A549 (cell line): ENCODE measurements at regions of chr10 and their contacts with region 1.

Region 1: GRCh38 chr10:74081192-74081803 is 69.3 kb downstream of the AP3M1 start:
- DNase-seq: peak; percentile 64 to 83
- ATAC-seq: peak; percentile 76 to 81; a peak in 5 of 6 replicates
- H3K4me3 ChIP-seq: no peak overlapping the region
- H3K27ac ChIP-seq: peak overlapping the region; percentile 77 to 80
- H3K4me1 ChIP-seq: peaks cover 67% of the 10 kb centered on the region
- CTCF ChIP-seq: peak; percentile 77
- EP300 ChIP-seq: no peak
- POLR2A ChIP-seq: no peak
- RAD21 ChIP-seq: peak; percentile 79 to 84

Region 2: GRCh38 chr10:73717556-73717955 is 363.7 kb before region 1 on chr10:
- CTCF ChIA-PET with region 1: no interaction called
- POLR2A ChIA-PET with region 1: no interaction called
- DNase-seq: no peak
- ATAC-seq: no peak
- H3K4me3 ChIP-seq: no peak overlapping the region
- H3K27ac ChIP-seq: no peak overlapping the region
- H3K4me1 ChIP-seq: no peaks in the 10 kb centered on the region
- CTCF ChIP-seq: no peak
- EP300 ChIP-seq: no peak
- POLR2A ChIP-seq: no peak
- RAD21 ChIP-seq: no peak

Region 3: GRCh38 chr10:73886085-73886529 is 195.2 kb before region 1 on chr10:
- CTCF ChIA-PET with region 1: interaction called, 64 read pairs
- POLR2A ChIA-PET with region 1: interaction called, 5 read pairs
- DNase-seq: peak; percentile 84
- ATAC-seq: peak; percentile 77 to 86
- H3K4me3 ChIP-seq: no peak overlapping the region
- H3K27ac ChIP-seq: peak overlapping the region; percentile 97 to 98
- H3K4me1 ChIP-seq: peaks cover 51% of the 10 kb centered on the region
- CTCF ChIP-seq: peak; percentile 93
- EP300 ChIP-seq: no peak
- POLR2A ChIP-seq: no peak
- RAD21 ChIP-seq: peak; percentile 99

Region 4: GRCh38 chr10:73956476-73957359 is 124.6 kb before region 1 on chr10:
- CTCF ChIA-PET with region 1: interaction called, 16 read pairs
- POLR2A ChIA-PET with region 1: no interaction called
- DNase-seq: no peak
- ATAC-seq: peak; percentile 26 to 57; a peak in 3 of 6 replicates
- H3K4me3 ChIP-seq: no peak overlapping the region
- H3K27ac ChIP-seq: peak overlapping the region; percentile 29 to 30; a peak in 4 of 6 replicates
- H3K4me1 ChIP-seq: peaks cover 13% of the 10 kb centered on the region; the same call in 2 of the 3 replicates
- CTCF ChIP-seq: no peak
- EP300 ChIP-seq: no peak
- POLR2A ChIP-seq: no peak
- RAD21 ChIP-seq: no peak

Region 5: DNA sequence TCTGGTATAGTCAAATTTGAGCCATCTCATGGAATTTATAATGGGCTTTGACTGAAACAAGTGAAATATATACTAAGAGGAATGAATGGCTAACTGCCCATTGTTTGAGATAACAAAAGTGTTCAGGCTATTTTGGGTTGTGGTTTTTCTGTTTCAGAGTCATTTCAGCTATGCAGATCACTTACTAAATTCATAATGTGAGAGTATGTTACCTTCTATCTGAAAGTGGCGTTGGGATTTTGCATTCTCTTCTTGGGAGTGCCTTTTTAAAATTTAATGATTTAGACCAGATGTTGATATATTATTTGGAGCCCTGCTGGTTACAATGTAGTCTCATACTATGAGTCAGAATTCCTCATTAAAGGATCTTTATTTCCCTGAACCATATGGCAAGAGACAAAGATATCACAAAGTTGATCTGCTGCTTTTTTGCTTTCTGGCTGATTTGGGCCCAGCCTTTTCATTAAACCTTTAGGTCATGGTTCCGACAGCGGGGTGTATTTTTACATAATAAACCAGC is 73.0 kb before region 1 on chr10:
- CTCF ChIA-PET with region 1: interaction called, 32 read pairs
- POLR2A ChIA-PET with region 1: no interaction called
- DNase-seq: no peak
- ATAC-seq: peak in 1 of 2 experiments; percentile 7; a peak in 1 of 6 replicates
- H3K4me3 ChIP-seq: no peak overlapping the region
- H3K27ac ChIP-seq: peak overlapping the region in 1 of 2 experiments; percentile 69; a peak in 4 of 6 replicates
- H3K4me1 ChIP-seq: peaks cover 79% of the 10 kb centered on the region
- CTCF ChIP-seq: no peak
- EP300 ChIP-seq: no peak
- POLR2A ChIP-seq: no peak
- RAD21 ChIP-seq: no peak

Region 6: DNA sequence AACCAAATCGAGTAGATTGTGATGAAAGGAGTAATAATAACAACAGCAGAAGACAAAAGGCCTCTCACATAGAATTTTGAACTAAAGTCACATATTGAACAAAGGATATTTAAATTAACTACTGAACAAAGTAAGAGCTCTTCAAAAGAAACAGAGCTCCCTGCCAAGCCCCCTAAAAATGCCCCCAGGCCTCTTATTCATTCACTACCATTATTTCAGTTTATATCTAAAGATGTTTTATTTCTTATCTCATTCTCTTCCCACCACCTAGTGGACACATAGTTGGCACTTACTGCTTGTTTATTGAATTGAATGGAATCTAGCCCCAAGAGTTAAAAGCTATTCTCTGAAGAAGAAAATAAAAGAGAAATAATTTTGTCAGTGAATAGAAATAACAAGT is 46.0 kb before region 1 on chr10:
- CTCF ChIA-PET with region 1: interaction called, 11 read pairs
- POLR2A ChIA-PET with region 1: no interaction called
- DNase-seq: no peak
- ATAC-seq: 0 out of 6 replicates have a peak, but pooled peaks of 1 of the 2 experiments have one; percentile 15
- H3K4me3 ChIP-seq: no peak overlapping the region
- H3K27ac ChIP-seq: no peak overlapping the region
- H3K4me1 ChIP-seq: peaks cover 50% of the 10 kb centered on the region
- CTCF ChIP-seq: peak; percentile 42
- EP300 ChIP-seq: no peak
- POLR2A ChIP-seq: no peak
- RAD21 ChIP-seq: peak; percentile 30 to 41; a peak in 3 of 5 replicates

Region 7: DNA sequence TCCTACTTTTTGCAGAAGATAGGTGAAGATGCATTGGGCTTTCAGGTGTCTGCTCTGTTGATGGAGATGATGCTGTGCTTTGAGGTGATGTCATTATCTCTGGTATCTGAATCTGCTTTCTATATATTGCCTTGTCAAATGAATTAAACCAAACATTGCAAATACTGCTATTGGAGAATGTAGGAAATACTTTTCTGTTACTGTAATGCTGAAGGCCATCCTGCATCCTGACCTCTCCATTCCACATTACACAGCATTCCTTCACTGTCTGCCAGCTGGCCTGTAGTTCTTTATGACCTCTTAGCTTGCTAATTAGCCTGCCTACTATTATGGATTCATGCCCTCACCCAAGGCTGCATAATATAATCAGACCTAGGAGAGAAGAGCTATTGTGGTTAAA is 10.1 kb before region 1 on chr10:
- CTCF ChIA-PET with region 1: interaction called, 27 read pairs
- POLR2A ChIA-PET with region 1: no interaction called
- DNase-seq: no peak
- ATAC-seq: no peak; a peak in 1 of 6 replicates
- H3K4me3 ChIP-seq: no peak overlapping the region
- H3K27ac ChIP-seq: peak overlapping the region; percentile 77 to 86
- H3K4me1 ChIP-seq: peaks cover 89% of the 10 kb centered on the region
- CTCF ChIP-seq: no peak
- EP300 ChIP-seq: no peak
- POLR2A ChIP-seq: no peak
- RAD21 ChIP-seq: no peak

Region 8: GRCh38 chr10:74103560-74104248 is 22.4 kb after region 1 on chr10:
- CTCF ChIA-PET with region 1: interaction called, 18 read pairs
- POLR2A ChIA-PET with region 1: no interaction called
- DNase-seq: peak; percentile 48 to 51
- ATAC-seq: peak in 1 of 2 experiments; percentile 76; a peak in 3 of 6 replicates
- H3K4me3 ChIP-seq: no peak overlapping the region
- H3K27ac ChIP-seq: no peak overlapping the region
- H3K4me1 ChIP-seq: no peaks in the 10 kb centered on the region
- CTCF ChIP-seq: peak; percentile 58
- EP300 ChIP-seq: no peak
- POLR2A ChIP-seq: no peak
- RAD21 ChIP-seq: peak; percentile 59

Region 9: DNA sequence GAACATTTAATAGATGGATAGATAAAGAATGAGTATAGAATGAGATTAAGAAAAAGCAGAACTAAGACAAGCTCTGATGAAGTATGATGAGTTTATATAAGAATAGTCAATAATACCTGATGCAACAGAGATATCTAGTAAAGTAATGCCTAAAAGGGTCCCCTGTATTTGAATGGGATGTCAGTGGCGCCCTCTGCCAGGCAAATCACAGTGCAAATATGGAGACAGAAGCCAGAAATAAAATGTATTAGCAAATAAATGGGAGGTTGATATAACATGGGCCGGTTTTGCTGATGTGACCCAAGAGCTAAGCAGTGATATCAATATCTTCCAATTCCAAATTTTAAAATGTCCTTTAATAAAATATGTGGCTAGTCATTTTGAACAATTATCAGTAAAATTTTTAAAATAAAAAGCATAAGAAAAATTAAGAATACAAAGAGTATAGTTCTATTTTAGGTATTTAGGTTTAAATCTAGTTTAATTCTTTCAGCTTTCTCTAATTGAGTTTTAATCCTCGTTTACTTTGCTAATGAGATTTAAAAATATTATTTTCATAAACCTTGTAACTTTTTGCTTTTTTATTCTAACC is 132.4 kb after region 1 on chr10:
- CTCF ChIA-PET with region 1: no interaction called
- POLR2A ChIA-PET with region 1: no interaction called
- DNase-seq: peak; percentile 59 to 68
- ATAC-seq: peak; percentile 19 to 73; a peak in 3 of 6 replicates
- H3K4me3 ChIP-seq: no peak overlapping the region
- H3K27ac ChIP-seq: no peak overlapping the region
- H3K4me1 ChIP-seq: 0 out of 3 replicates have a peak, but pooled peaks cover 4% of the 10 kb centered on the region
- CTCF ChIP-seq: peak; percentile 59; the same call in 2 of the 3 replicates
- EP300 ChIP-seq: no peak
- POLR2A ChIP-seq: no peak
- RAD21 ChIP-seq: peak; percentile 54 to 62

Region 10: DNA sequence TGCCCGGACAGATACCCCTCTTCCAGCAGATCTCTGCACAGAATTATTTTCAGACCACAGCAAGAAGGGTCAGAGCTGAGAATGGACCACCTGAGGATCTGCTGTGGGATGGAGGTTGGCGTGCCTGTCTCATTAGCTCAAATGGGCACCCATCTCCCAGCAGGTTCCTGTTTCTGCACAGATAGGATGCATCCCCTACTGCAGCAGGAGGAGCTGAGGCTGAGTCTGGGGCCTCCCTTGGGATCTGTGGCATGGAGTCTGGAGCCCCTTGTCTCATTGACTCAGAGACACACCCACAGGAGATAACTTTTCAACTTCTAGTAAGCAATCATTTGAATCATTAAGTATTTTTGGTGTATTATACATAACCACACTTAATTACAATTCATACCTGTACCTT is 282.4 kb after region 1 on chr10:
- CTCF ChIA-PET with region 1: no interaction called
- POLR2A ChIA-PET with region 1: no interaction called
- DNase-seq: no peak
- ATAC-seq: peak; percentile 31 to 43; a peak in 2 of 6 replicates
- H3K4me3 ChIP-seq: no peak overlapping the region
- H3K27ac ChIP-seq: peak overlapping the region in 1 of 2 experiments; percentile 24; a peak in 2 of 6 replicates
- H3K4me1 ChIP-seq: peaks cover 20% of the 10 kb centered on the region; the same call in 2 of the 3 replicates
- CTCF ChIP-seq: no peak
- EP300 ChIP-seq: no peak
- POLR2A ChIP-seq: no peak
- RAD21 ChIP-seq: no peak